ENCODE measurements at regions of chr14 and their contacts with region 1.

Region 1: GRCh38 chr14:21014761-21015190 is 10.1 kb downstream of the NDRG2 start:
- DNase-seq: peak; percentile 91
- H3K4me3 Mint-ChIP-seq: no peak overlapping the region
- H3K27ac Mint-ChIP-seq: no peak overlapping the region
- H3K4me1 Mint-ChIP-seq: no peaks in the 10 kb centered on the region
- H3K27me3 Mint-ChIP-seq: peaks cover 5% of the 10 kb centered on the region

Region 2: GRCh38 chr14:21003788-21004346 is 10.9 kb before region 1 on chr14:
- CTCF ChIA-PET with region 1: interaction called, 95 read pairs
- intact Hi-C with region 1: no loop called
- DNase-seq: no peak
- H3K4me3 Mint-ChIP-seq: no peak overlapping the region
- H3K27ac Mint-ChIP-seq: no peak overlapping the region
- H3K4me1 Mint-ChIP-seq: no peaks in the 10 kb centered on the region
- H3K27me3 Mint-ChIP-seq: no peaks in the 10 kb centered on the region

Region 3: GRCh38 chr14:21039585-21040369 is 25.0 kb after region 1 on chr14:
- CTCF ChIA-PET with region 1: interaction called, 147 read pairs
- intact Hi-C with region 1: loop called (anchors 1 kb)
- DNase-seq: peak; percentile 27
- H3K4me3 Mint-ChIP-seq: no peak overlapping the region
- H3K27ac Mint-ChIP-seq: no peak overlapping the region
- H3K4me1 Mint-ChIP-seq: peaks cover 7% of the 10 kb centered on the region
- H3K27me3 Mint-ChIP-seq: peaks cover 9% of the 10 kb centered on the region

Region 4: DNA sequence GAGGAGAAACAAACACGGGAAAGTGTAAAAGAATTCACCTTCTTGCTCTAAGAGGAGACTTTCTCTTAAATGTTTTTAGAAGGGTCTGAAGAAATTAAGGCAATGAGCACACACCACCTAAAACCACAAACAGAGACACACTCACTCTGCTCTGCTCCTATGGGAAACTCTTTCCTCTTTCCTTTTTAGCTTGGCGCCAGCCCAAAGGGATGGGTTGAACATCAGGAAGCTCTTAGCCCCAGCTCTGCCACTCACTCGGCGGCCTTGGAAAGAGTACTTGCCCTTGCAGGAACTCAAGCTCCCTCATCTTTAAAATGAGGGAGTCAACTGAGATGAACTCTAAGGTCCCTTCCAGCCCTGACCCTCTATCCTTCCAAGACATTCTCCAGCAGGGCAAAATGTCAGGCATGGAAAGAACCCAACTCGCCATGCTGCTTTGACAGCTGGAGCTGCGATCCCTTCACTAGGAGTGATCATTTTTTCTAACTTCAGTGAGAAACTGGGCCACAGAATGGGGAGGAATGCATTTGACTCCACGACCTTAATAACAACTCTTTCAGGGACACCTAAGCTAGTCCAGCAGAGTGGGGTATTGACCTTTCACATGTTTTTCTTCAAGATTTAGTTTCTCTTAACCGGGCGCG is 41.9 kb after region 1 on chr14:
- CTCF ChIA-PET with region 1: interaction called, 10 read pairs
- intact Hi-C with region 1: no loop called
- DNase-seq: no peak
- H3K4me3 Mint-ChIP-seq: no peak overlapping the region
- H3K27ac Mint-ChIP-seq: no peak overlapping the region
- H3K4me1 Mint-ChIP-seq: no peaks in the 10 kb centered on the region
- H3K27me3 Mint-ChIP-seq: peaks cover 4% of the 10 kb centered on the region

Region 5: DNA sequence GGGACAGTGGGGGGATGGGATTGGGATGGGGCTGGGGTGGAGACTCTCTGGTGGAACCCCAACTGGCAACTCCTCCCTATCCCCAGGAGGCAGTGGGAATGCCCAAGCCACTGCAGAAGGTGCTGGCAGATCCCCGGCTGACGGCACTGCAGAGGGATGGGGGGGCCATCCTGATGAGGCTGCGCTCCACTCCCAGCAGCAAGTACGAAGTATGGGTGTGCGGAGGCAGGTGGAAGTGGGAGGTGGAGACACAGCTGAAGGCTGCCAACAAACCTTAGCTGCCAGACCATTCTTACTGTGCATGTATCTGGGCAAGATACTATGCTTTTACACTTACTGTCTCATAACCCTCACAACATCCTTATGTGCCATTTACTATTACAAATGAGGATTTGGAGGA is 63.5 kb after region 1 on chr14:
- CTCF ChIA-PET with region 1: interaction called, 10 read pairs
- intact Hi-C with region 1: no loop called
- DNase-seq: no peak
- H3K4me3 Mint-ChIP-seq: no peak overlapping the region
- H3K27ac Mint-ChIP-seq: no peak overlapping the region
- H3K4me1 Mint-ChIP-seq: no peaks in the 10 kb centered on the region
- H3K27me3 Mint-ChIP-seq: peaks cover 4% of the 10 kb centered on the region

Region 6: DNA sequence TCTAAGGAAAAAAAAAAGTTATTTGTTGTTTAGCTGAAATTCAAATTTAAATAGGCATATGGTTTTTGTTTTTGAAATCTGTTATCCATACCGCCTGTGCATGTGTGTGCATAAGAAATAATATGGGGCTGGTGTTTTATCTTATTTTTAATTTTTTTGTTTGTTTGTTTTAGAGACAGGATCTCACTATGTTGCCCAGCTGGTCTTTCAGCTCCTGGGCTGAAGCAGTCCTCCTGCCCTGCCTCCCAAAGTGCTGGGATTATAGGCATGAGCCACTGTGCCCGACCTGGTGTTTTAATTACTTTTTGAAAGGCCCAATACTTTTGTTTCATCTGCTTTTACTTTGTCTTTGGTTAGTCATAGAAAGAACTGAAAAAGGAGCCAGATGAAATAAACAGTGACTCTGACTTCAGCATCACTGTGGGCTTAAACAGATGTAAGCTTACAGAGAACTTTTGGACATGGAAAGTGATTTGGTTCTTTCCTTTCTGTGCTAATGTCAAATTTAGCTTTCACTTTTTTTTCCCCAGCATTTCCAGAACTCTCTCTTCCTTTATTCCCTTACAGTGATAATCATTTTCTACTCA is 331.9 kb after region 1 on chr14:
- CTCF ChIA-PET with region 1: no interaction called
- intact Hi-C with region 1: no loop called
- DNase-seq: no peak
- H3K4me3 Mint-ChIP-seq: no peak overlapping the region
- H3K27ac Mint-ChIP-seq: no peak overlapping the region
- H3K4me1 Mint-ChIP-seq: peaks cover 6% of the 10 kb centered on the region
- H3K27me3 Mint-ChIP-seq: no peaks in the 10 kb centered on the region

Measured in activated naive CD4-positive, alpha-beta T cell treated with anti-CD3 and anti-CD28 coated beads for 36 hours (primary cell).